ENCODE measurements at regions of chr3 and their contacts with region 1.

Region 1: GRCh38 chr3:151918253-151919029 is 45.0 kb downstream of the SUCNR1 start:
- DNase-seq: no peak
- H3K4me3 ChIP-seq: no peak overlapping the region
- CTCF ChIP-seq: peak; percentile 47

Region 2: DNA sequence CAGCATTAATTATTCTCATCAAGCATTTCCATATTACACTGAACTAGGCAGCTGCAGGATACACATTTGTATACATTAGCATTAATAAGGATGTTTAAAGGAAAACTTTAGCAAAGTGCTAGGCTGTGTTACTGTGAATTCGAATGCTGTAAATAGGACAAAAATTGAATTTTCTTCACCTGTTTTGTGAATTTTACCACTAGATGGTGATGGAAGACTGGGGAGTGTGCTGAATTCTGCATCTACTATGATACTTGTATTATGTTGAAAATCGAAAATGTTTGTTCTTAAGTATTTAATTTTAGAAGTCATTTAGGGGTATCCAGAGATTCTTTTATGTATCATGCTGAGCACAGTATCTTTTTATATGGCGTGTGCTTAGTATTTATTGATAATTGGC is 627.8 kb before region 1 on chr3:
- CTCF ChIA-PET with region 1: interaction called, 23 read pairs
- POLR2A ChIA-PET with region 1: no interaction called
- DNase-seq: no peak
- H3K4me3 ChIP-seq: no peak overlapping the region
- CTCF ChIP-seq: peak; percentile 28

Region 3: DNA sequence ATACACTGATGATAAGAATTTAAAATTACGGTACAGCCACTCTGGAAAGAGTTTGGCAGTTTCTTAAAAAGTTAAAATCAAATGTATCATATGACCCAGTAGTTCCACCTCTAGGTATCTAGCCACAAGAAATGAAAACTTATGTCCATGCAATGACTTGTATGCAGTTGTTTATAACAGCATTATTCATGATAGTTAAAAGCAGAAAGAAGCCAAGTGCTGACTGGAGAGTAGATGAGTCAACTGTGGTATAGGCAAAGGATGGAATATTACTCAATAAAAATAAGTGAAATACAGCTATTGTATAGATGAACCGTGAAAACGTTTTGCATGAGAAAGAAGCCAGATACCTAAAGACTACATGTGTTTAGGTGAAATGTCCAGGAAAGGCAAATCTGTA is 616.7 kb before region 1 on chr3:
- CTCF ChIA-PET with region 1: interaction called, 10 read pairs
- POLR2A ChIA-PET with region 1: no interaction called
- DNase-seq: no peak
- H3K4me3 ChIP-seq: no peak overlapping the region
- CTCF ChIP-seq: no peak

Region 4: GRCh38 chr3:151468284-151468917 is 450.0 kb before region 1 on chr3:
- CTCF ChIA-PET with region 1: interaction called, 31 read pairs
- POLR2A ChIA-PET with region 1: no interaction called
- DNase-seq: no peak
- H3K4me3 ChIP-seq: no peak overlapping the region
- CTCF ChIP-seq: peak; percentile 77

Region 5: GRCh38 chr3:151875759-151876158 is 42.7 kb before region 1 on chr3:
- CTCF ChIA-PET with region 1: no interaction called
- POLR2A ChIA-PET with region 1: no interaction called
- DNase-seq: no peak
- H3K4me3 ChIP-seq: no peak overlapping the region
- CTCF ChIP-seq: no peak

Region 6: DNA sequence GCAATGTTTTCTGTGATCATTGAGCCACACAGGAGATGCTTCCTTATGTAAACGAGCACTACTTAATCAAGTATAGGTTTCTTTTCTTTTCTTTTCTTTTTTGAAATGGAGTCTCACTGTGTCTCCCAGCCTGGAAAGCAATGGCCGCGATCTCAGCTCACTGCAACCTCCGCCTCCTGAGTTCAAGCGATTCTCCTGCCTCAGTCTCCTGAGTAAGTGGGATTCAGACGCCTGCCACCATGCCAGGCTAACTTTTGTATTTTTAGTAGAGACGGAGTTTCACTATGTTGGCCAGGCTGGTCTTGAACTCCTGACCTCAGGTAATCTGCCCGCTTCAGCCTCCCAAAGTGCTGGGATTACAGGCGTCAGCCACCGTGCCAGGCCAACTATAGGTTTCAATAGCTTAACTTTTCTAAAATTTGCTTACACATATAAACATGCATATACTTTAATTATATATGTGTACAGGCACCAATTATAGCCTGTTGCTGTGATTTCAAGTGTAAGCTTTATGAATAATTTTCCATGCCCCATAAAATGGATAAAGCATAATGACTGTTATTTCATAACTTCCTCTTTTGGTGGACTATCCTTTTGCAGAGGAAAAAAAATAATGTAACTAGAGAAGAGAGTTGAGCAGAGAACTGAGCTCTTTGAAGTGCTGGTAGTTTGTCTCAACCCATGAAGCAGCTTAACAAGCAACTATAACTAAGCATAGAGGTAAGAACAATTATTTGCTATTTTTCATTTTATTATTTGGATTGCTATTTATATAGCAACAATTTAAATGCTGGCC is 325.5 kb after region 1 on chr3:
- CTCF ChIA-PET with region 1: no interaction called
- POLR2A ChIA-PET with region 1: no interaction called
- DNase-seq: no peak
- H3K4me3 ChIP-seq: no peak overlapping the region
- CTCF ChIP-seq: no peak